ENCODE measurements at regions of chr11 and their contacts with region 1.

Region 1: GRCh38 chr11:57567515-57568329 is at the start of gene UBE2L6:
- DNase-seq: peak; percentile 82
- ATAC-seq: peak; percentile 69
- H3K4me3 ChIP-seq: peak within 1 kb of the TSS; percentile 83 to 99 (median 98)
- H3K4me3 Mint-ChIP-seq: peak within 1 kb of the TSS; percentile 99
- H3K27ac ChIP-seq: peak within 1 kb of the TSS; percentile 83 to 92
- H3K27ac Mint-ChIP-seq: peak within 1 kb of the TSS; percentile 99
- H3K4me1 ChIP-seq: peaks cover 18 to 26% of the 10 kb centered on the region in 2 donors
- H3K4me1 Mint-ChIP-seq: peaks cover 36% of the 10 kb centered on the region
- H3K27me3 ChIP-seq: no peaks in the 10 kb centered on the region
- H3K27me3 Mint-ChIP-seq: no peaks in the 10 kb centered on the region
- CTCF ChIP-seq: peak; percentile 95
- total RNA-seq, gene UBE2L6: 66.3 and 70.7 TPM in 2 replicates

Region 2: GRCh38 chr11:57335343-57336110 is 232.2 kb before region 1 on chr11 and contains the start of gene SSRP1:
- CTCF ChIA-PET with region 1: no interaction called
- POLR2A ChIA-PET with region 1: no interaction called
- intact Hi-C with region 1: loop called (anchors 1 kb)
- DNase-seq: peak; percentile 91
- ATAC-seq: peak; percentile 96
- H3K4me3 ChIP-seq: peak within 1 kb of the TSS; percentile 61 to 87 (median 83)
- H3K4me3 Mint-ChIP-seq: peak within 1 kb of the TSS; percentile 97
- H3K27ac ChIP-seq: peak within 1 kb of the TSS; percentile 74 to 87
- H3K27ac Mint-ChIP-seq: peak within 1 kb of the TSS; percentile 99
- H3K4me1 ChIP-seq: peaks cover 17 to 23% of the 10 kb centered on the region in 2 donors
- H3K4me1 Mint-ChIP-seq: peaks cover 27% of the 10 kb centered on the region
- H3K27me3 ChIP-seq: no peaks in the 10 kb centered on the region
- H3K27me3 Mint-ChIP-seq: peaks cover 5% of the 10 kb centered on the region
- CTCF ChIP-seq: no peak
- total RNA-seq, gene SSRP1: 63.8 and 66.6 TPM in 2 replicates

Region 3: DNA sequence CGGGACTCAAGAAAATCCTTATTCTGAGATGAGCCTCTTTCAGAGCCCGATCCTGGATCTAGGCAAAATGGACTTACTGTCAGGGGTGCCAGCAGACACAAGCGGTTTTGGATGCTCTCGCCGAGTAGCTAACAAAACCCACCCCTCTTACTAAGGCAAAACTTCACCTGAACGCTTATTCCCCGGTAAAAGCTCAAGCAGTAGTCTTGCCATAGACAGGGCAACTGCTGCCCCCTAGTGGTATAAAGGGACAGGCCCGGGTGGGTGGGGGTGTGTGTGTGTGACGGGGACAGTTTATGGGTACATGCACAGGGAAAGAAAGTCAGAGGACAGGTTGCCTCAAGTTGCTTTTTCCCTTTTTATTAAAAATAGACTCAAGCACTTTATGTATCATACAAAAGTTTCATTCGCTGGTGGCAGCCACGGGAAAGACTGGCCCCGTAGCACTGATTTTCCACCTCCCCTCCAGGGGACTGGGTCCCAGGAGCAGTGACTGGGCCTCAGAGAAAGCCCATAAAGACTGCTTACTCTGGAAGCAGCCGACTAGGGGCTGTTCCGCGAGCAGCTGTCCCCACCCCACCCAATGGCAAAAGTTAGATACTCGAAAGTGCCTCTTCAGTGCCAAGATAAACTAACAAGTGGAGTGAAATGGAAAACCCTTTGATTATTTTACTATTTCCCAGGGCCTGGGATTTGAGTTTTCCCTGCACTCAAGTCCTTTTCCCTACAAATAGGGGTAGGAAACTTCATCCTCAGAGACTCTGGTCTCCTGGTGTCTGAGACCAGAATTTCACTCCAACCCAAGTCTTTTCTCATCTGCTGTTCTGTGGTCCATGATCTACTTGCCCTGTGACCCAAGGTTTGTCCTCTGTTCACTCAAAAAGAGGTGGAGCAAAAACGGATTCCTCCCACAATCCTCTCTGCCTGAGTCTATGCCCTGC is 77.3 kb after region 1 on chr11:
- CTCF ChIA-PET with region 1: interaction called, 86 read pairs
- POLR2A ChIA-PET with region 1: no interaction called
- intact Hi-C with region 1: loop called (anchors 1 kb)
- DNase-seq: peak; percentile 85
- ATAC-seq: peak; percentile 71
- H3K4me3 ChIP-seq: no peak overlapping the region
- H3K4me3 Mint-ChIP-seq: no peak overlapping the region
- H3K27ac ChIP-seq: no peak overlapping the region
- H3K27ac Mint-ChIP-seq: no peak overlapping the region
- H3K4me1 ChIP-seq: peaks cover 43 to 46% of the 10 kb centered on the region in 2 donors
- H3K4me1 Mint-ChIP-seq: peaks cover 40% of the 10 kb centered on the region
- H3K27me3 ChIP-seq: peaks cover 0 to 58% (median 47%) of the 10 kb centered on the region in 4 experiments
- H3K27me3 Mint-ChIP-seq: peaks cover 70% of the 10 kb centered on the region
- CTCF ChIP-seq: peak; percentile 81

Region 4: DNA sequence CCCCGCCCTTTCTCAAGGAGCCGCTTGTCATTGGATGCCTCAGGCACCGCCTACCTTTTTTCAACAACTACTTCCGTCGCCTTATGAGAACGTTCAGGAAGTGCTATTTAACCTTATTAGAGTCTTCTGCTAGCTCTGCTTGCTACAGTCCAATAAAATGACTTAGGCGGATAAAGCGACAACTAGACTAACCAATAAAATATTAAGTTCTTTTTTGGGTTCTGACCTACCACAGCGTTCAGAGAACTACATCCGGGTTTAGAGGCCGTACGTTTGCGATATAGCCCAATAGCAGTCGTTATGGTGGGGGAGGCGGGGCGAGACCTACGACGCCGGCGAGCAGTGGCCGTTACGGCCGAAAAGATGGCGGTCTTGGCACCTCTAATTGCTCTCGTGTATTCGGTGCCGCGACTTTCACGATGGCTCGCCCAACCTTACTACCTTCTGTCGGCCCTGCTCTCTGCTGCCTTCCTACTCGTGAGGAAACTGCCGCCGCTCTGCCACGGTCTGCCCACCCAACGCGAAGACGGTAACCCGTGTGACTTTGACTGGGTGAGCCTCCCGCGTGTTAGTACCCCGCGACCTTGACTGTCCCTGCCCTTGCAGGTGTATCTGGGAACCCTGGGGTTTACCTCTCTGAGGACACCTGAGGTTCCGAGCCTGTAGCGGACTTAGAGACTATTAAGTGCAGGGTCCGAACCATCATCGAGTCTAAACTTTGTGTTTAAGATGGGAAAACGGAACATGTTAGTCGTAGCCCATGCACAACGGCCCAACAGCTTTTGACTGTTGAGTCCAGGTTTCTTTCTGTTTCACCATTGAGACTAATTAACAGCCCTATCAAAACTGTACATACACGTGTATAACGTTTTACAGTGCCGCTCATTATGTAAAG is 144.8 kb after region 1 on chr11 and contains the start of gene TMX2:
- CTCF ChIA-PET with region 1: interaction called, 4 read pairs
- POLR2A ChIA-PET with region 1: no interaction called
- intact Hi-C with region 1: loop called (anchors 1 kb)
- DNase-seq: peak; percentile 96
- ATAC-seq: peak; percentile 86
- H3K4me3 ChIP-seq: peak within 1 kb of the TSS; percentile 78 to 100 (median 93)
- H3K4me3 Mint-ChIP-seq: peak within 1 kb of the TSS; percentile 99
- H3K27ac ChIP-seq: peak within 1 kb of the TSS; percentile 70 to 96
- H3K27ac Mint-ChIP-seq: peak within 1 kb of the TSS; percentile 94
- H3K4me1 ChIP-seq: peaks cover 21 to 28% of the 10 kb centered on the region in 2 donors
- H3K4me1 Mint-ChIP-seq: peaks cover 42% of the 10 kb centered on the region
- H3K27me3 ChIP-seq: no peaks in the 10 kb centered on the region
- H3K27me3 Mint-ChIP-seq: no peaks in the 10 kb centered on the region
- CTCF ChIP-seq: no peak
- total RNA-seq, gene TMX2: 58.8 and 60.2 TPM in 2 replicates

Region 5: DNA sequence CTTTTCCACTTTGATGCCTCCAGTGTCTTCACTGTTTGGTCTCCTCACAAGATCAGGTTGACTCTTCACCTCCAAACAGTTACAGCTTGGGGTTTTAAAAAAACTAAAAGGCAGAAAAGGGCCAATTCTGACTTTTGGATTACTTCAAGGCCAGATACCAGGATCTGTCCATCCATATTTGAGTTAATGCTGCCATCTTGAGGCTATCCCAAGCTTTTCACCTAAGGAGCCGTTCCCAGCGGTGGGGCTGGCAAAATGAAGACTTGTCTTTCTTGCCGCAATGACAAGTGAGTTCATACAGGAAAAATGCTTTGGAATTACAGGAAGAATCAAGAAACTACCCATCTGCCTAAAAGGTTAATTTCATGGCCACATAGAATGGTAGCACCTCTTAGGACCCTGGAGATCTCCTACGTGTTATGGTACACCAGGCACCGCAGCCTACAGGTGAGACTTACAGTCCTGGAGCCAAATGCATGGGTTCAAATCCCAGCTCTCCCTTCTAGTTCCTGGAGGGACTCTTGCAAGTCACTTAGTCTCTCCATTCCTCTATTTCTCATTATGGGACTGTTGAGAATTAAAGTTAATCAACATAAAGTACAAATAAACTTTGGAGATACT is 946.1 kb after region 1 on chr11:
- CTCF ChIA-PET with region 1: no interaction called
- POLR2A ChIA-PET with region 1: no interaction called
- intact Hi-C with region 1: loop called (anchors 5 kb)
- DNase-seq: peak; percentile 39
- ATAC-seq: no peak
- H3K4me3 ChIP-seq: no peak overlapping the region
- H3K4me3 Mint-ChIP-seq: no peak overlapping the region
- H3K27ac ChIP-seq: no peak overlapping the region
- H3K27ac Mint-ChIP-seq: no peak overlapping the region
- H3K4me1 ChIP-seq: no peaks in the 10 kb centered on the region
- H3K4me1 Mint-ChIP-seq: no peaks in the 10 kb centered on the region
- H3K27me3 ChIP-seq: no peaks in the 10 kb centered on the region
- H3K27me3 Mint-ChIP-seq: no peaks in the 10 kb centered on the region
- CTCF ChIP-seq: peak; percentile 14